ENCODE measurements at regions of chr1 and their contacts with region 1.

Region 1: GRCh38 chr1:7177438-7178146 is 392.3 kb downstream of the CAMTA1 start:
- DNase-seq: no peak
- H3K4me3 ChIP-seq: no peak overlapping the region
- H3K27ac ChIP-seq: no peak overlapping the region
- H3K4me1 ChIP-seq: no peaks in the 10 kb centered on the region
- H3K27me3 ChIP-seq: no peaks in the 10 kb centered on the region
- CTCF ChIP-seq: no peak
- EP300 ChIP-seq: no peak
- POLR2A ChIP-seq: no peak

Region 2: DNA sequence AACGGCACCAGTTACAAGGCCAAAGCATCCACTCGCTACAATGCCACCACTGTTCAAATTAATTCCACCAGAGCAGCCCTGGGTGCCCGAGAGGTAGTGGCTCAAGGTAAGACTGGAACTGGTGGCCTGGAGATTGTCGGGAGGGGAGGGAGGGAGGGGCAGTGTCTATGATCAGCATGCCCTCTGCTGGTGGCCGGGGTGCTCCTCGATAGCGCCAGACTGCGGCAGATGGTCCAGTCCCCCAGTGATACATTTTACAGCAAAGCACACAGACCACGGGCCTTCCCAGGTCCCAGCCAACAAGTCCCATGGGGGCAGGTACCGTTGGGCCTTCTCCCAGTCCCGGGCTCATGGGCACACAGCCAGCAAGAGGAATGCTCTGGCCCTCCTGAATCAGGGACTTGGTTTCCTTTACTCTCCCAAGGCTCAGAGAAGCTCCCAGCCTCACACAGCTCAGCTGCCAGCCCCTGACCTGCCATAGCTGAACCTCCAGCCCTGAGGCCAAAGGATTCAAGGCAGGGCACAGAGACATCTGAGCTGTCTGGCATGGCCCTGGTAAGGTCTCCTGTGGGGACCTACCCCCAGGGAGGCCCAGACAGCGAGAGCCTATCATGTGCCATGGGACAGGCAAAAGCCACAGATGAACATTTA is 799.4 kb before region 1 on chr1:
- in situ Hi-C with region 1: no loop called
- intact Hi-C with region 1: loop called (anchors 5 kb)
- DNase-seq: no peak
- H3K4me3 ChIP-seq: no peak overlapping the region
- H3K27ac ChIP-seq: no peak overlapping the region
- H3K4me1 ChIP-seq: peaks cover 0 to 7% (median 3%) of the 10 kb centered on the region in 4 donors
- H3K27me3 ChIP-seq: no peaks in the 10 kb centered on the region
- CTCF ChIP-seq: no peak
- EP300 ChIP-seq: no peak
- POLR2A ChIP-seq: no peak